Thyroid gland (tissue), 4 donors: ENCODE measurements at regions of chr17 and their contacts with region 1.

Region 1: DNA sequence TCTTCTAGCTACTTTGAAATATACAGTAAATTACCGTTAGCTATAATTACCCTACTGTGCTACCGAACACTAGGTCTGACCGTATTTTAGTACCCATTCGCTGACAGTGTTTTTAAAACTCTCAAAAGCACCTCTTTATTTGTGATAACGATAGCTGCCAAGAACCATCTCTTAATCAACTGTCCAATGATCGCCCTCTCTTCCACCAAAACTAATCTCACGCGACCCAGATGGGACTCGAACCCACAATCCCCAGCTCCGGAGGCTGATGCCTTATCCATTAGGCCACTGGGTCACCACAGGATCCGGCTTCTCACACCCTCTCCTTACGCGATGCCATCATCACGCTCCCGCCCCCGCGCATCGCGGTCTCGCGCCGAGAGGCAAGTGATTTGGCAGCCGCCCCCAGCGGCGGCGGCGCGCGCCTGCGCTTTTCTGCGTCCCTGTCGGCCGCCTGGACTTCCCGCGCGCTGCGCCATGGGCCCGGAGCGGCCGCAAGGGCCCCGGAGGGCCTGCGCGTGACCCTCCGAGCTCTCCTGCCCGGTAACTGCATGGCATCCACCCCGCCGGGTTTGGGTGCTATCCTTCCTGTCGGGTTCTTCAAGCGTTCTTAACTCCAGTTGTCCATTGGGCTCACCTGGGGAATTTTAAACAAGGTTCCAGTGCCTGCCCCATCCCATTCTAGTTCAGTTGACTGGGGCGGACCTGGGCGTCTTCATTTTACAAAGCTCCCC is 15.7 kb upstream of the KPNA2 start:
- DNase-seq: peak; percentile 95 to 97
- H3K4me3 ChIP-seq: peak overlapping the region; percentile 27 to 41 (median 32)
- H3K27ac ChIP-seq: peak overlapping the region; percentile 77 to 89 (median 85)
- H3K4me1 ChIP-seq: peaks cover 4% of the 10 kb centered on the region in 2 donors
- H3K27me3 ChIP-seq: no peaks in the 10 kb centered on the region
- CTCF ChIP-seq: peak in 5 of 6 experiments; percentile 5 to 52 (median 42)
- POLR2A ChIP-seq: peak in 1 of 2 donors; percentile 78

Region 2: GRCh38 chr17:67959288-67959900 is 60.4 kb before region 1 on chr17:
- intact Hi-C with region 1: loop called (anchors 10 kb)
- DNase-seq: no peak
- H3K4me3 ChIP-seq: no peak overlapping the region
- H3K27ac ChIP-seq: no peak overlapping the region
- H3K4me1 ChIP-seq: no peaks in the 10 kb centered on the region
- H3K27me3 ChIP-seq: no peaks in the 10 kb centered on the region
- CTCF ChIP-seq: no peak
- POLR2A ChIP-seq: no peak